ENCODE measurements at regions of chr15 and their contacts with region 1.

Region 1: GRCh38 chr15:81265944-81266775 is 57.8 kb downstream of the STARD5 start:
- DNase-seq: peak; percentile 93
- H3K4me3 Mint-ChIP-seq: peak overlapping the region; percentile 65
- H3K27ac Mint-ChIP-seq: no peak overlapping the region
- H3K4me1 Mint-ChIP-seq: peaks cover 29% of the 10 kb centered on the region
- H3K27me3 Mint-ChIP-seq: no peaks in the 10 kb centered on the region

Region 2: GRCh38 chr15:80776420-80777045 is 489.6 kb before region 1 on chr15:
- CTCF ChIA-PET with region 1: interaction called, 4 read pairs
- intact Hi-C with region 1: loop called (anchors 2 kb)
- DNase-seq: peak; percentile 85
- H3K4me3 Mint-ChIP-seq: no peak overlapping the region
- H3K27ac Mint-ChIP-seq: no peak overlapping the region
- H3K4me1 Mint-ChIP-seq: peaks cover 12% of the 10 kb centered on the region
- H3K27me3 Mint-ChIP-seq: peaks cover 22% of the 10 kb centered on the region

Region 3: GRCh38 chr15:81106560-81106959 is 159.6 kb before region 1 on chr15:
- CTCF ChIA-PET with region 1: interaction called, 254 read pairs
- intact Hi-C with region 1: loop called (anchors 1 kb)
- DNase-seq: peak; percentile 55
- H3K4me3 Mint-ChIP-seq: no peak overlapping the region
- H3K27ac Mint-ChIP-seq: no peak overlapping the region
- H3K4me1 Mint-ChIP-seq: peaks cover 1% of the 10 kb centered on the region
- H3K27me3 Mint-ChIP-seq: peaks cover 8% of the 10 kb centered on the region

Region 4: GRCh38 chr15:81155375-81156218 is 110.6 kb before region 1 on chr15:
- CTCF ChIA-PET with region 1: interaction called, 126 read pairs
- intact Hi-C with region 1: loop called (anchors 1 kb)
- DNase-seq: peak; percentile 35
- H3K4me3 Mint-ChIP-seq: no peak overlapping the region
- H3K27ac Mint-ChIP-seq: no peak overlapping the region
- H3K4me1 Mint-ChIP-seq: peaks cover under 1% of the 10 kb centered on the region
- H3K27me3 Mint-ChIP-seq: no peaks in the 10 kb centered on the region

Region 5: GRCh38 chr15:81244306-81244705 is 21.9 kb before region 1 on chr15:
- CTCF ChIA-PET with region 1: interaction called, 12 read pairs
- intact Hi-C with region 1: no loop called
- DNase-seq: no peak
- H3K4me3 Mint-ChIP-seq: no peak overlapping the region
- H3K27ac Mint-ChIP-seq: no peak overlapping the region
- H3K4me1 Mint-ChIP-seq: no peaks in the 10 kb centered on the region
- H3K27me3 Mint-ChIP-seq: no peaks in the 10 kb centered on the region

Region 6: GRCh38 chr15:81323944-81324881 is 58.1 kb after region 1 on chr15 and contains the start of gene STARD5:
- CTCF ChIA-PET with region 1: interaction called, 32 read pairs
- intact Hi-C with region 1: no loop called
- DNase-seq: peak; percentile 98
- H3K4me3 Mint-ChIP-seq: peak within 1 kb of the TSS; percentile 98
- H3K27ac Mint-ChIP-seq: peak within 1 kb of the TSS; percentile 78
- H3K4me1 Mint-ChIP-seq: peaks cover 38% of the 10 kb centered on the region
- H3K27me3 Mint-ChIP-seq: no peaks in the 10 kb centered on the region
- total RNA-seq, gene STARD5: 10.1 to 11.7 TPM

Region 7: GRCh38 chr15:81373775-81374395 is 107.7 kb after region 1 on chr15 and contains the start of gene TMC3:
- CTCF ChIA-PET with region 1: no interaction called
- intact Hi-C with region 1: no loop called
- DNase-seq: no peak
- H3K4me3 Mint-ChIP-seq: no peak within 1 kb of the TSS
- H3K27ac Mint-ChIP-seq: no peak within 1 kb of the TSS
- H3K4me1 Mint-ChIP-seq: no peaks in the 10 kb centered on the region
- H3K27me3 Mint-ChIP-seq: no peaks in the 10 kb centered on the region
- total RNA-seq, gene TMC3: not detected

Region 8: DNA sequence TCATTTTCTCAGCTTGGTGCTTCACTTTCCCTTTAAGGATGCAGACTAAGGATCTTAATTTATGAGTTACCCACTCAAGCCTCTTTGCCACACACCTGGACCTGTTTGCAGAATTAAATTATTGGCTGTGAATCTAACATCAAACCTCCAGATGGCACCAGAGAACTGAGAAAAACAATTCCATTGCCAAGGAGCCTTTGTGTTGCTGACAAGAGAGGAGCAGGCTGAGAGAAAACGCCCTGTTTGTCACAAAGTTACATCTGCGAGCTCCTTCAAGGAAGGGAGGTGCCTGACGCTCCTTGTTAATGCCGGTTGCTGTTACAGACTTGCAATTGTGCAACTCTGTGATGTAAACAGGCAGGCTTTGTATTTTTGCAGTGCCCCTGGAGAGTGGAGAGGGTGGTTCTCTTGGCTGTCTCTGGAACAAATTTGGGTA is 144.2 kb after region 1 on chr15:
- CTCF ChIA-PET with region 1: interaction called, 16 read pairs
- intact Hi-C with region 1: no loop called
- DNase-seq: peak; percentile 31
- H3K4me3 Mint-ChIP-seq: no peak overlapping the region
- H3K27ac Mint-ChIP-seq: no peak overlapping the region
- H3K4me1 Mint-ChIP-seq: peaks cover 12% of the 10 kb centered on the region
- H3K27me3 Mint-ChIP-seq: peaks cover 14% of the 10 kb centered on the region